Aorta (tissue), 5 donors: ENCODE measurements at regions of chr5 and their contacts with region 1.

Region 1: DNA sequence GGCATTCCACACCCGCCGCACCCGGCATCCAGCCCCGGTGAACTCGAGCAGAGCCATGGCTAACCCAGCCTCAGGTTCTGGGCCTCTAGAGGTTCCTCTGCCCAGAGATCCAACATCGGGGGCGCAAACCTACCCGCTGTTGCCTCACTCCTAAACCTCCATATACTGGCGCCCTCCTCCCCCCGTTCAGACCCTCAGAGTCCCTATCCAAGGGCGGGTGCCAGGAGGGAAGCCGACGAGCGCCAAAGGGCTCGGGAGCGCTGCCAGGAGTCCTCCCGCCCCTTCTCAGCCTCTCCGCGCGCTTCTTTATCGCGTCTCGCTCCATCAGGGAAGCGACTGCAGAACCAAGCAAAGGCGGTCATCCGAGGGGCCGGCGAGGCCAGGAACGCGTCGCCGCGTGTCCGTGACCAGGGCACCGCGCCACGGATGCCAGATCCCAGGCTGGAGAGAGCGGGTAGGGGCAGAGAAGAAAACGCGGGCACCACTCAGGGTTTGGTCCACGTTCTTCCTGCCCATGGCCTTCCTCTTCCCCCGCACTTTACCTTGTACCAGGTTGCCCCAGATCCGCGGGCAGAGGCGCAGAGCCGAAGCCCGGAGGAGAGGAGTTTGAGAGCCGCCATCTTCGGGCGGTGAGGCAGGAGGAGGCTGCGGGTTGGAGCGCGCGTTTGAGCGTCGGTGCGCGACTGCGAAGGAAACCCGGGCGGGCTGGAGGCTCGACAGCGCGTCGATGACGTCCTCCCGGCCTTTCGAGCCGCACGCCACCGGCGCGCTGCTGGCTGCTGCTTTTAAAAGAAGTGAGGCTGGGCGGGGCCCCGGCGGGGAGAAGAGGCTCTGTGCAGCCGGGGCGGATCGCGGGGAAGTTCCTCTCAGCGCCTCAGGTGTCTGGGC is at the start of gene OXCT1:
- DNase-seq: peak; percentile 89 to 93
- ATAC-seq: peak; percentile 89
- H3K4me3 ChIP-seq: peak within 1 kb of the TSS; percentile 60 to 91
- H3K27ac ChIP-seq: peak within 1 kb of the TSS; percentile 93 to 95
- H3K4me1 ChIP-seq: peaks cover 0 to 6% of the 10 kb centered on the region in 2 donors
- H3K27me3 ChIP-seq: no peaks in the 10 kb centered on the region
- total RNA-seq, gene OXCT1: 31.4 to 32.1 TPM

Region 2: GRCh38 chr5:41903892-41904799 is 34.2 kb after region 1 on chr5 and contains the start of gene RIMOC1:
- intact Hi-C with region 1: loop called in 1 of 2 experiments (anchors 2 kb)
- DNase-seq: peak; percentile 99
- ATAC-seq: peak; percentile 100
- H3K4me3 ChIP-seq: peak within 1 kb of the TSS; percentile 65 to 89
- H3K27ac ChIP-seq: peak within 1 kb of the TSS; percentile 80 to 83
- H3K4me1 ChIP-seq: peaks cover 0 to 2% of the 10 kb centered on the region in 2 donors
- H3K27me3 ChIP-seq: no peaks in the 10 kb centered on the region
- total RNA-seq, gene RIMOC1: 25.1 to 25.2 TPM

Region 3: DNA sequence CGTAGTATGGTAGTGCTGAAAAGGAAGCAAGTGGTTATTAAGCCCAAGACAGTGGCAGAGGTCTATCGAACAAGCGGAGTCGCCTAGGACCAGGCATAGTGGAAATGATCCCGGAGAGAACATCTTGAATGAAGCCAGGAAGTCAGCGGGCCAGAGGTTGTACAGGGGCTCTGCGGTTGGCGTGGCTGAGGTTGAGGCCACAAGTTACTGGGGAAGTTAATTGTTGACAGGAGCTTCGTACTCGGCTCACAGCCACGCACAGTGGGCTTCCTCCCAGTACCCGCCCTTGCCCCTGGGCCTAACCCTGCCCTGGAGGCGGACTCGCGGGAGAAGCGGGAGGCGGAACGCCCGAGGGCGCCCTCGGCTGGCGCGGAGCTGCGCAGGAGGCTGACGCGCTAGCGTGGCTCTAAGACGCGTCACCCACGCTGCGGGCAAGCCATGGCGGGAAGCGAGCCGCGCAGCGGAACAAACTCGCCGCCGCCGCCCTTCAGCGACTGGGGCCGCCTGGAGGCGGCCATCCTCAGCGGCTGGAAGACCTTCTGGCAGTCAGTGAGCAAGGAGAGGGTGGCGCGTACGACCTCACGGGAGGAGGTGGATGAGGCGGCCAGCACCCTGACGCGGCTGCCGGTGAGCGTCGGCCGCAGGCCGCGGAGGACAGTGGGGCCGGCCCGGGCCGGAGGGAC is 55.0 kb after region 1 on chr5 and contains the start of gene FBXO4:
- intact Hi-C with region 1: loop called in 1 of 2 experiments (anchors 1 kb)
- DNase-seq: peak; percentile 94 to 96
- ATAC-seq: peak; percentile 99
- H3K4me3 ChIP-seq: peak within 1 kb of the TSS; percentile 74 to 86
- H3K27ac ChIP-seq: peak within 1 kb of the TSS; percentile 51 to 99
- H3K4me1 ChIP-seq: no peaks in the 10 kb centered on the region
- H3K27me3 ChIP-seq: no peaks in the 10 kb centered on the region
- total RNA-seq, gene FBXO4: 10.2 to 11.5 TPM